Natural killer cell (primary cell): ENCODE measurements at regions of chrX and their contacts with region 1.

Region 1: GRCh38 chrX:49043220-49043986 is at the start of gene TFE3:
- DNase-seq: peak; percentile 90 to 97
- ATAC-seq: peak; percentile 86 to 95 (median 86)
- H3K4me3 ChIP-seq: peak within 1 kb of the TSS; percentile 66
- H3K4me3 Mint-ChIP-seq: peak within 1 kb of the TSS; percentile 86
- H3K27ac ChIP-seq: peak within 1 kb of the TSS; percentile 94
- H3K27ac Mint-ChIP-seq: peak within 1 kb of the TSS; percentile 89 to 92
- H3K4me1 ChIP-seq: peaks cover 33% of the 10 kb centered on the region
- H3K4me1 Mint-ChIP-seq: peaks cover 23 to 33% of the 10 kb centered on the region in 2 donors
- H3K27me3 ChIP-seq: no peaks in the 10 kb centered on the region
- H3K27me3 Mint-ChIP-seq: no peaks in the 10 kb centered on the region
- CTCF ChIP-seq: peak; percentile 30
- total RNA-seq, gene TFE3: 43.8 to 57.5 (median 43.9) TPM

Region 2: GRCh38 chrX:49002091-49002935 is 41.1 kb before region 1 on chrX and contains the start of gene GRIPAP1:
- intact Hi-C with region 1: loop called (anchors 2 kb)
- DNase-seq: peak; percentile 67 to 94
- ATAC-seq: peak; percentile 77 to 89 (median 78)
- H3K4me3 ChIP-seq: peak within 1 kb of the TSS; percentile 98
- H3K4me3 Mint-ChIP-seq: peak within 1 kb of the TSS; percentile 97
- H3K27ac ChIP-seq: peak within 1 kb of the TSS; percentile 99
- H3K27ac Mint-ChIP-seq: peak within 1 kb of the TSS; percentile 97 to 99
- H3K4me1 ChIP-seq: peaks cover 22% of the 10 kb centered on the region
- H3K4me1 Mint-ChIP-seq: peaks cover 16 to 35% of the 10 kb centered on the region in 2 donors
- H3K27me3 ChIP-seq: no peaks in the 10 kb centered on the region
- H3K27me3 Mint-ChIP-seq: no peaks in the 10 kb centered on the region
- CTCF ChIP-seq: no peak
- total RNA-seq, gene GRIPAP1: 120 to 141 (median 131) TPM

Region 3: GRCh38 chrX:49029876-49030275 is 13.5 kb before region 1 on chrX:
- intact Hi-C with region 1: no loop called
- DNase-seq: no peak
- ATAC-seq: peak in 2 of 3 donors; percentile 12 to 15
- H3K4me3 ChIP-seq: no peak overlapping the region
- H3K4me3 Mint-ChIP-seq: no peak overlapping the region
- H3K27ac ChIP-seq: no peak overlapping the region
- H3K27ac Mint-ChIP-seq: no peak overlapping the region
- H3K4me1 ChIP-seq: no peaks in the 10 kb centered on the region
- H3K4me1 Mint-ChIP-seq: no peaks in the 10 kb centered on the region
- H3K27me3 ChIP-seq: no peaks in the 10 kb centered on the region
- H3K27me3 Mint-ChIP-seq: no peaks in the 10 kb centered on the region
- CTCF ChIP-seq: no peak